Stomach (tissue), 19 donors: ENCODE measurements at regions of chr5 and their contacts with region 1.

Region 1: GRCh38 chr5:149387081-149387631 is 8.1 kb upstream of the IL17B start:
- DNase-seq: no peak
- H3K4me3 ChIP-seq: no peak overlapping the region
- H3K27ac ChIP-seq: peak overlapping the region; percentile 33 to 94 (median 87)
- H3K4me1 ChIP-seq: peaks cover 6 to 65% (median 22%) of the 10 kb centered on the region in 4 donors
- H3K27me3 ChIP-seq: no peaks in the 10 kb centered on the region
- CTCF ChIP-seq: no peak
- EP300 ChIP-seq: no peak
- POLR2A ChIP-seq: no peak

Region 2: GRCh38 chr5:149108651-149109280 is 278.4 kb before region 1 on chr5:
- intact Hi-C with region 1: no loop called
- DNase-seq: no peak
- H3K4me3 ChIP-seq: no peak overlapping the region
- H3K27ac ChIP-seq: no peak overlapping the region
- H3K4me1 ChIP-seq: no peaks in the 10 kb centered on the region
- H3K27me3 ChIP-seq: no peaks in the 10 kb centered on the region
- CTCF ChIP-seq: no peak
- EP300 ChIP-seq: no peak
- POLR2A ChIP-seq: no peak

Region 3: DNA sequence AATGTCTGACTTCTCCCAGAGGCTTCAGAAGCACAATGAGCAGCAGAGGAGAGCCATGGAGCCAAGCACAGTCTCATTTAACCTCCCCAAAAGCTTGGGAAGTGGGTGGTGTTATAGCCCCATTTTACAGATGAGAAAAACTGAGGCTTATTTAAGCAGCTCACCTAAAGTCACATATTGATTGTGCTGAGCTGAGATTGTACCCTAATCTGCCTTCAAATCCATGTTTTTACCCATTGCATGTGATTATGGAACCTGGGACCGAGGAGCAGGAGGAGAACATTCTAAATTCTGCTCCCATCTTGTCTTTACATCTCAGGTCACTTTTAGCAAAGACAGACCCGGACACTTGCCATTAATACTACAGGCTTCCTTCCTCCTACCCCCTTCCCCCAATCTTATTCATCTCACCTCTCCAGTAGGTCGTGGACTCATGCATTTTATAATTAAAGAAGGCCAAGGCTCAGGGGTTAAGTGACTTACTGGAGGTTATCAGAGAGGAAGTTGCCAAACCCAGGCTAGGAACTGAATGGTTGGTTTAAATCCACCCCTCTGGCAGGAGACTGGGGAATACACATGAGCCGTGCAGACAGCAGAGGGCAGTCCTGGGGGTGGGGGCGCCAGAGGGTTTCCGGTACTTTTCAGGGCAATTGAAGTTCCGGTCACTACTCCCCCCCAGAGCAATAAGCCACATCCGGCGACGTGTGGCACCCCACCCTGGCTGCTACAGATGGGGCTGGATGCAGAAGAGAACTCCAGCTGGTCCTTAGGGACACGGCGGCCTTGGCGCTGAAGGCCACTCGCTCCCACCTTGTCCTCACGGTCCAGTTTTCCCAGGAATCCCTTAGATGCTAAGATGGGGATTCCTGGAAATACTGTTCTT is 42.9 kb after region 1 on chr5:
- intact Hi-C with region 1: loop called (anchors 5 kb)
- DNase-seq: peak in 1 of 2 donors; percentile 62
- H3K4me3 ChIP-seq: no peak overlapping the region
- H3K27ac ChIP-seq: peak overlapping the region; percentile 28 to 95 (median 76)
- H3K4me1 ChIP-seq: peaks cover 7 to 46% (median 19%) of the 10 kb centered on the region in 4 donors
- H3K27me3 ChIP-seq: no peaks in the 10 kb centered on the region
- CTCF ChIP-seq: no peak
- EP300 ChIP-seq: no peak
- POLR2A ChIP-seq: no peak